Activated naive CD4-positive, alpha-beta T cell treated with anti-CD3 and anti-CD28 coated beads for 36 hours (primary cell): ENCODE measurements at regions of chr3 and their contacts with region 1.

Region 1: DNA sequence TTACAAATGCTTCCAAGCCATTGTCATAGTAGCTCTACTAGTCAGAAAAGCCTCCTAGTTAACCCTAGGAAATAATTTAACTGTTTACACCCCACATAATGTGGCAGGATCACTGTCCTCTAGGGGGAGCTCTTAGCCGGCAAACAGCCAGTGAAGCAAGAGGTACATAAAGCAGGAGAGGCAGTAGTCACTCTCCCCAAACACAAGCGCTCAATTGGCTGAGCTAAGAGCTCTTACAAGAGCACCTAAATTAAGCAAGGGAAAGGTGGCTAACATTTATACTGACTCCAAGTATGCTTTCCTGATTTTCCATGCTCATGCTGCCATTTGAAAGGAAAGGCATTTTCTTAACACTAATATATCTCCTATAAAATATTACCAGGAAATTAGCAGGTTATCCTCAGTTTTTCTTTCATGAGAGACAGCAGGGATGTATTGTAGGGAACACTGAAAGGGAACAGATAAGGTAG is 37.6 kb downstream of the NCEH1 start:
- DNase-seq: peak; percentile 89
- H3K4me3 Mint-ChIP-seq: no peak overlapping the region
- H3K27ac Mint-ChIP-seq: no peak overlapping the region
- H3K4me1 Mint-ChIP-seq: no peaks in the 10 kb centered on the region
- H3K27me3 Mint-ChIP-seq: no peaks in the 10 kb centered on the region

Region 2: DNA sequence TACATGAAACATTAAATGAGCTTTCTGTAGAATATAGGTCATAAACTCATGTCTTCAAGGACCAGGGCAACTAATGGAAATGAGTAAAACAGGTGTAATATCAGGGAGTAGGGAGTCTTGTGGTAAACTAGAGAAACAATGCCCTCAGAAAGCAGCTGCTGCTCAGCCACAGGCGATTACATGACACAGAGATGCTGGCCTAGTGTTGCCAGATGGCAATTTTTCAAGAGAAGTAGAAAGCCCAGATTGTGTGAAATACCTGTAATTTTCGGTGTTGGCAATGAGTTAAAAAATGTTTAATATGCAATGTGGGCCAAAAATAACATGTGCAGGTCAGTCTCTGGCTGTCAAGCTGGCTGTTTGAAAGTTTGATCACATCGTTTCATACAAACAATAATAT is 14.3 kb after region 1 on chr3:
- CTCF ChIA-PET with region 1: interaction called, 13 read pairs
- intact Hi-C with region 1: no loop called
- DNase-seq: no peak
- H3K4me3 Mint-ChIP-seq: no peak overlapping the region
- H3K27ac Mint-ChIP-seq: no peak overlapping the region
- H3K4me1 Mint-ChIP-seq: peaks cover 10% of the 10 kb centered on the region
- H3K27me3 Mint-ChIP-seq: no peaks in the 10 kb centered on the region

Region 3: DNA sequence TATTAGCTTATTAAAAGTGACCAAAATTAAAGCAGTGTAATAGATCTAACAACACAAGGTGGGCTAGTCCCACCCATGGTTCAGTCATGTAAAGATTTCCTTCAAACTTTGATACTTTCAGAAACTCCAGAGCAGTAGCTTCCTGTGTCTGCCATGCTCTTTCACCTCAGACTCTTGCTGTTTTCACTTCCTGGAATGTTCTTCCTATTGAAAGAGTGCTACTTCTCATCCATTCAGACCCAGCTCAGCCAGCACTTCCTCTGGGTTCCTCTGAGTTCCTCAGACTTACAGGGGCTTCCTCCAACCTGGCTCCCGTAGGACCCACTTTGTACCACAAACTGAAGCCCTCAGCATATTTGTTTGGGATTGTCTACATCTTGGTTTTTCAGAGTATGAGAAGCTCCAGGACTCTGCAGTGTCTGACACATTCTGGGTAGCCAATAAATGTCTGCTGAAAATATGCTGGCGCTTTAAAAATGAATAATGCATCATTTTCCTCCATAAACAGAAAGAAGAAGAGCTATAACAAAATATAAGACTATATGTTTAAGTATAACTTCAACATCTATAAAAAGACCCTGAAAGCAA is 19.6 kb after region 1 on chr3:
- CTCF ChIA-PET with region 1: interaction called, 13 read pairs
- intact Hi-C with region 1: no loop called
- DNase-seq: no peak
- H3K4me3 Mint-ChIP-seq: no peak overlapping the region
- H3K27ac Mint-ChIP-seq: no peak overlapping the region
- H3K4me1 Mint-ChIP-seq: peaks cover 8% of the 10 kb centered on the region
- H3K27me3 Mint-ChIP-seq: no peaks in the 10 kb centered on the region

Region 4: GRCh38 chr3:172710664-172711453 is 37.6 kb after region 1 on chr3 and contains the start of gene NCEH1:
- CTCF ChIA-PET with region 1: interaction called, 12 read pairs
- intact Hi-C with region 1: loop called (anchors 1 kb)
- DNase-seq: peak; percentile 85
- H3K4me3 Mint-ChIP-seq: peak within 1 kb of the TSS; percentile 91
- H3K27ac Mint-ChIP-seq: no peak within 1 kb of the TSS
- H3K4me1 Mint-ChIP-seq: peaks cover 11% of the 10 kb centered on the region
- H3K27me3 Mint-ChIP-seq: no peaks in the 10 kb centered on the region
- total RNA-seq, gene NCEH1: 2.9 to 3.5 TPM

Region 5: DNA sequence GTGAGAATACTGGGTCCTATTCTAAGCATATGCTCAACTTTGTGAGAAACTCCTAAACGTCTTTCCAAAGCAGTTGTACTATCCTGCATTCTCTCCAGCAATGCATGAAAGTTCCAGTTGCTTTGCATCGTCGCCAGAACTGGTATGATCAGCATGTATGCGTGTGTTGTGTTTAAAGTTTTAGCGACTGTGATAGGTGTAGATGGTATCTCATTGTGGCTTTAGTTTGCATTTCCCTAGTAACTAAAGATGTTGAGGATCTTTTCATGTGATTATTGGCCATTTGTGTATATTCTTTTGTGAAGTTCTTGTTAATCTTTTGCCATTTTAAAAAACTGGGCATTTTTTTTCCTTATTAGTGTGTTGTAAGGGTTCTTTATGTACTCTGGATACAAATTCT is 352.7 kb after region 1 on chr3:
- CTCF ChIA-PET with region 1: no interaction called
- intact Hi-C with region 1: no loop called
- DNase-seq: no peak
- H3K4me3 Mint-ChIP-seq: no peak overlapping the region
- H3K27ac Mint-ChIP-seq: no peak overlapping the region
- H3K4me1 Mint-ChIP-seq: no peaks in the 10 kb centered on the region
- H3K27me3 Mint-ChIP-seq: no peaks in the 10 kb centered on the region

Region 6: DNA sequence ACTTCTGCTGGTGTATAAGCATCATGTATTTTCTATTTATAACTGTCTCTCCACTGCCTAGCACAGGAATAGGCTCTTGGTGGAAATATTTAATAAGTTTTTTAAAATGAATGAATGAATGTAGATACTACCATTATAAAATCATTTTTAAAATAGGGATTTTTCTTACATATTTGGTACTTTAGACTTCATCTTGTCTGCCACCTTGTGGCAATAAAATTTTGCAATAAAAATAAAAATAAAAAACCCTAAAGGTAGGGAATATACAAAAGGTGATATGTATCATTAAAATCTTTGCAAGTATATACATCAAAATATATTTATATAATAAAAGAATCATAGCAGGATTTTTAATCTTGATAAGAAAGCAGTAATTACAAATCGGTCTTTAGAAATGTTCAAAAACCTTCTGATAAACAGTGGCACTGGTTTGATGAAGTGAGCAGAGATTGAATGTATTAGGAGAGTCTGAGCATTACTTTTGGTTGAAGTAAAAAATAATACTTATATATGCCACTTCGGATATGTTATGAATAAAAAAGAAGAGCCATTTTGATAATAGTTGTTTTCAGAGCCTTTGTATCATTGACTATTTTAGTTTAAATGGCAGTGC is 372.6 kb after region 1 on chr3:
- CTCF ChIA-PET with region 1: no interaction called
- intact Hi-C with region 1: loop called (anchors 1 kb)
- DNase-seq: no peak
- H3K4me3 Mint-ChIP-seq: no peak overlapping the region
- H3K27ac Mint-ChIP-seq: no peak overlapping the region
- H3K4me1 Mint-ChIP-seq: no peaks in the 10 kb centered on the region
- H3K27me3 Mint-ChIP-seq: no peaks in the 10 kb centered on the region